Activated T-helper 1 cell treated with anti-CD3 and anti-CD28 coated beads, Interleukin-12 subunit alpha, Interleukin-12 subunit beta, Interleukin-2, Interleukin-4 antibody, amounts not matched to agents 30 ng/mL and 10 ng/mL and 1 ng/mL, durations not matched to agents 14 hours and 24 hours and 36 hours (primary cell): ENCODE measurements at regions of chrX and their contacts with region 1.

Region 1: GRCh38 chrX:132219343-132219768 is at the start of gene RAP2C:
- DNase-seq: peak; percentile 25
- H3K4me3 Mint-ChIP-seq: peak within 1 kb of the TSS; percentile 91
- H3K27ac Mint-ChIP-seq: peak within 1 kb of the TSS; percentile 95
- H3K4me1 Mint-ChIP-seq: peaks cover 26% of the 10 kb centered on the region
- H3K27me3 Mint-ChIP-seq: no peaks in the 10 kb centered on the region
- total RNA-seq, gene RAP2C: 33.8 and 37.6 TPM in 2 replicates

Region 2: DNA sequence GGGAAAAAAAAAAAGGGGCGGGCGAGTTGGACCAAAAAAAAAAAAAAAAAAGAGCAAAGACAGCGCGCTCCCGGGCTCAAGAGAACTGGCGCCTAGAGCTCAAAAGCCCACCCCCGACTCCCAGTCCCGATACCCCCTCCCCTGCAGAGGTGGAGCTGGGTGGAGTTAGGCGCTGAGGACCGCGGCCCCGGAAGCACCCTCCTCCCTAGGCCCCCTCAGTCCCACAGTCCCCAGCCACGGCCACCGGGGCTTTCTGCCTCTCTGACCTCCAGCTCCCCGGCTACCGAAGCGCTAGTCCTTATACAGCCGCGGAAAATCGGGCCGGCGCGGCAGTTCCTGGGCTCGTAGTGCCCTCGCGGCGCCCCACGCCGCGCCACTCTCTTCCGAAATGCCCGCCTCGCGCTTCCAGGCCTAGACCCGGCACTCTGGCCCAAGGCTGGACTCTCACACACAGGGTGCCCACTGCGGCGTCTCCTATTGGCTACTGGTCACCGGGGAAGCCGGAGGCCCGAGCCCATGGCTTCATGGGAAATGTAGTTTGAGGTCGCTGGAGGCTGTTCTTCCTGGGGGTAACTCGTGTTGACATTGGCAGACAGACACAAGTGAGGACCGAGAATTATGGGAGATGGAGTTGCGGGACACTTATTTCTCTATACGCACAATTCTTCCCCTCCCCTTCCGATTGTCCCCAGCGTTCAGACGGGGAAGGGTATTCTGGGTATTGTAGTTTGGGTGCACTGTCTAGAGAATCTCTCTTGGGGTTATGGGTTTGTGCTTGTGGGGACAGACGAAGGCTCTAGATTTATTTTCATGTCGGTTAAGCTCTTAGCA is 1316.4 kb before region 1 on chrX and contains the start of gene ENOX2:
- intact Hi-C with region 1: loop called (anchors 5 kb)
- DNase-seq: peak; percentile 83
- H3K4me3 Mint-ChIP-seq: no peak within 1 kb of the TSS
- H3K27ac Mint-ChIP-seq: peak within 1 kb of the TSS; percentile 83
- H3K4me1 Mint-ChIP-seq: peaks cover 9% of the 10 kb centered on the region
- H3K27me3 Mint-ChIP-seq: peaks cover 5% of the 10 kb centered on the region
- total RNA-seq, gene ENOX2: 15.6 and 20.5 TPM in 2 replicates

Region 3: DNA sequence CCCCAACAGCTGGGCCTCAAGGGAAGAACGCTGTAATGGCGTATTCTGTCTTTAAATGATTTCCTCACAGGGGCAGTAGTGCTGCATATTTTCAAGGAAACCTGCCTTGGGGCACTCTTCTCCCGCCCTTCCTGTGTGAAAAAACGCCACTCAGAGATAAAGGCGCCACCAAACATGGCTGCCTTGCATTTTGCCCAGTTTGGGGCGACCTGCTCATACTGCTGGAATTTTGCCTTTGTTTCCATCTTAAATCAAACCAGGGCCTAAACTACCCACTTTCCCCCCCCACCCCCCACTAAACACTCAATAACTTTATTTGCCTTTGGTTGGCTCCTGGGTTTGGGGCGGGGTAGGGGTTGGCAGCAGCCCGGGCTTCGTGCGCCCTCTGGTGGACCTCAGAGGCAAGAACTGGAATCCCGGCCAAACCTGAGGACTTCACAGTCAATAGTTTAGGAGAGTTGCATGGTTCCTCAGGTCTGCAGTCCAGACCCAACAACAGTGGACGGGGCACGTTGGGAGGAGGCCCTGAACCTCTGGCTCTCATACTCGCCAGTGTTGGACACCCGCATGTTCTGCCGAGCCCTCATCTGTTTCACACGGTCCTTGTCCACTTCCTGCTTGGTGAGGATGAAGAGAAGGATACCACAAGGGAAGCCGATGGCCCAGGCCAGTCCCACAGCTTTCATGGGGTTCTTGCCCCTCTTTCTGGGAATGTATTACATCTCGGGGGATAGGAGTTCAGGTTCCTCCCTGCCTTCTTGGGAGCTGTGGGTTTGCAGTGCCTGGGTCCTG is 416.3 kb before region 1 on chrX:
- intact Hi-C with region 1: no loop called
- DNase-seq: no peak
- H3K4me3 Mint-ChIP-seq: no peak overlapping the region
- H3K27ac Mint-ChIP-seq: no peak overlapping the region
- H3K4me1 Mint-ChIP-seq: no peaks in the 10 kb centered on the region
- H3K27me3 Mint-ChIP-seq: no peaks in the 10 kb centered on the region

Region 4: DNA sequence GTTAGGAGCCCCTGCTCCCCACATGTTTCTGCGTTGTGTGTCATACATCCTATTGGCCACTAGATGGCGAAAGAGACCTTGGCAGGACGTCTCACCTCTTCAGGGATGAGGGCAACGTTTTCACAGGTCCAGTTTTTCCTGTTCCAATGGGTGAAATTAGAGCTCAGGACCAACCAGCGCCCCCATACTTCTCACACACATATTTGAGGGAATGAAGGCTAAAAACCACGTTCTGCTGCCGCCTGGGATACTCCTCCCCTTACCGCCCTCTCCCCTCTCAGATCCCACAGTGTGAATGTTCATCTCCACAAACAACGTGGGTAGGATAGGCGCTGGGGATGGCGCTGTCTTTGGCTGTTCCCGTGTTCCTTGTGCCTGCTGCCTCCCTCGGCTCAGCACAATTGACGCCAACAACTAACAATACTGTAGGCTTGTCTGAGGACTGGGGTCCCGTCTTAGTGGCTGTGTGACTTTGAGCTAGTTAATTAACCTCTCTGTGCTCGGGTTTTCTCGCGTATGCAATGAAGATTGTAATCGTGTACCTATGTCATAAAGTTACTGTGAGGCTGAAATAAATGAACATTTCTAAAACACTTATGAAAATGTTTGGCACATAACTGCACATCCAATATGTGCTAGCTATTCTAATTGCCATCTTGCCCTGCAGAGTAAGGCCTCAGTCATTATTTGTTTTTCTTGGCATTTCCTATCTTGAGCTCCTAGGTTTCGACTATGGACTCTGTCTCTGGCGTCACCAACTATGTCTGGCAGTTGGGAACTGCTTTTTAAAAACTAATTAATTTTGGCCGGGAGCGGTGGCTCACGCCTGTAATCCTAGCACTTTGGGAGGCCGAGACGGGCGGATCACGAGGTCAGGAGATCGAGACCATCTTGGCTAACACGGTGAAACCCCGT is 377.6 kb before region 1 on chrX:
- intact Hi-C with region 1: loop called (anchors 1 kb)
- DNase-seq: no peak
- H3K4me3 Mint-ChIP-seq: no peak overlapping the region
- H3K27ac Mint-ChIP-seq: no peak overlapping the region
- H3K4me1 Mint-ChIP-seq: no peaks in the 10 kb centered on the region
- H3K27me3 Mint-ChIP-seq: no peaks in the 10 kb centered on the region

Region 5: GRCh38 chrX:132092439-132093065 is 126.8 kb before region 1 on chrX:
- intact Hi-C with region 1: loop called (anchors 1 kb)
- DNase-seq: peak; percentile 0
- H3K4me3 Mint-ChIP-seq: no peak overlapping the region
- H3K27ac Mint-ChIP-seq: no peak overlapping the region
- H3K4me1 Mint-ChIP-seq: peaks cover 11% of the 10 kb centered on the region
- H3K27me3 Mint-ChIP-seq: no peaks in the 10 kb centered on the region

Region 6: DNA sequence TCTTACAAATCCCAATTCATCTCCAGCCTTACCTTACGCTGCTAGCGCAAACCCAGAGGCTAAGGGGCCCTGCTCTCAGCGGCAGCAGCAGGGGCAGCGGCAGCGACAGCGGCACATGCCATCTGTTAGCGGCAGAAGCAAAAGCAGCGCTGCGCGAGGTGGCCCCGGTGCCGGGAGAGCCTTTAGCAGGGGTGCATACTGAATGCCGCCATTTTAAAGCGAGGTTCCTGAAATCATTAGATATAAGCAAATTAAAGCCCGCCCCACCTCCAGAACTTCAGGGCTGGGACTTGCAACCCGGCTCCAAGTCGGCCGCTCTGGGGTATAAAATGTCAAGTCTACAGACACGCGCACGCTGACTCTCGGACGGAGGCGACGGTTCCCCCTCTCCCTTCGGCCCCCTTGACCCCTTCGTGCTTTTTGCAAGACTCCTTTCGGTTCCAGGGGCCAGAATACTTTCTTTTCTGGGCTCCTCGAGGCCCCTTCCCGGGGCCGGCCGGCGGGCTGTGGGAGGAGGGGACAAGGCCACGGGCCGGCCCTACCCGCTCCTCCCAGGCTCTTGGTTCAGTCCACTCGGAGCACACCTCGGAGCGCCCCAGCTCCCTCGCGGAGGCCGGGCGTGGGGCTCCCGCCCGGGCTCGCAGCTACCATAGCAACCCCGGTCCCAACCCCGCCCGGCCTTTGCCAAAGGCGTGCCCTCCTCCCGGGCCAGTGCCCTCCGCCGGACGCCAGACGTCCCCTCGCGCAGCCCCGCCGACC is 269.6 kb after region 1 on chrX and contains the start of gene MBNL3:
- intact Hi-C with region 1: loop called (anchors 2 kb)
- DNase-seq: peak; percentile 45
- H3K4me3 Mint-ChIP-seq: peak within 1 kb of the TSS; percentile 95
- H3K27ac Mint-ChIP-seq: peak within 1 kb of the TSS; percentile 94
- H3K4me1 Mint-ChIP-seq: peaks cover 28% of the 10 kb centered on the region
- H3K27me3 Mint-ChIP-seq: peaks cover 7% of the 10 kb centered on the region
- total RNA-seq, gene MBNL3: 8.9 and 12.3 TPM in 2 replicates

Region 7: GRCh38 chrX:132776486-132777210 is 557.3 kb after region 1 on chrX:
- intact Hi-C with region 1: loop called (anchors 5 kb)
- DNase-seq: no peak
- H3K4me3 Mint-ChIP-seq: no peak overlapping the region
- H3K27ac Mint-ChIP-seq: no peak overlapping the region
- H3K4me1 Mint-ChIP-seq: peaks cover 19% of the 10 kb centered on the region
- H3K27me3 Mint-ChIP-seq: no peaks in the 10 kb centered on the region